ENCODE measurements at regions of chr14 and their contacts with region 1.

Region 1: DNA sequence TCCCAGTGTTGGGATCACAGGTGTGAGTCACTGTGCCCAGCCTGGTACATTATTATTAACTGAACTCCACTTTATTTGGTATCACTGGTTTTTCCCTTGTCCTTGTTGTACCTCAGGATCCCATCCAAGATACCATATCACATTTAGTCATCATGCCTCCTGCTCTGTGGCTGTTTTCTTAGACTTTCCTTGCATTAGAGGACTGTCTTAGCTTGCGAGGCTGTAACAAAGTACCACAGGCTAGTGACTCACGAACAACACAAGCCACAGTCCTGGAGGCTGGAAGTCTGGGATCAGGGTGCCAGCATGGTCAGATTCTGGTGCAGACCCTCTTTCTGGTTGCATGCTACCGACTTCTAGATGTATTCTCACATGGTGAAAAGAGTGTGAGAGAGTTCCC is 12.2 kb downstream of the KLC1 start:
- DNase-seq: no peak

Region 2: GRCh38 chr14:103629503-103630121 is 11.6 kb before region 1 on chr14:
- intact Hi-C with region 1: loop called in 1 of 2 experiments (anchors 1 kb)
- DNase-seq: peak; percentile 89

Region 3: DNA sequence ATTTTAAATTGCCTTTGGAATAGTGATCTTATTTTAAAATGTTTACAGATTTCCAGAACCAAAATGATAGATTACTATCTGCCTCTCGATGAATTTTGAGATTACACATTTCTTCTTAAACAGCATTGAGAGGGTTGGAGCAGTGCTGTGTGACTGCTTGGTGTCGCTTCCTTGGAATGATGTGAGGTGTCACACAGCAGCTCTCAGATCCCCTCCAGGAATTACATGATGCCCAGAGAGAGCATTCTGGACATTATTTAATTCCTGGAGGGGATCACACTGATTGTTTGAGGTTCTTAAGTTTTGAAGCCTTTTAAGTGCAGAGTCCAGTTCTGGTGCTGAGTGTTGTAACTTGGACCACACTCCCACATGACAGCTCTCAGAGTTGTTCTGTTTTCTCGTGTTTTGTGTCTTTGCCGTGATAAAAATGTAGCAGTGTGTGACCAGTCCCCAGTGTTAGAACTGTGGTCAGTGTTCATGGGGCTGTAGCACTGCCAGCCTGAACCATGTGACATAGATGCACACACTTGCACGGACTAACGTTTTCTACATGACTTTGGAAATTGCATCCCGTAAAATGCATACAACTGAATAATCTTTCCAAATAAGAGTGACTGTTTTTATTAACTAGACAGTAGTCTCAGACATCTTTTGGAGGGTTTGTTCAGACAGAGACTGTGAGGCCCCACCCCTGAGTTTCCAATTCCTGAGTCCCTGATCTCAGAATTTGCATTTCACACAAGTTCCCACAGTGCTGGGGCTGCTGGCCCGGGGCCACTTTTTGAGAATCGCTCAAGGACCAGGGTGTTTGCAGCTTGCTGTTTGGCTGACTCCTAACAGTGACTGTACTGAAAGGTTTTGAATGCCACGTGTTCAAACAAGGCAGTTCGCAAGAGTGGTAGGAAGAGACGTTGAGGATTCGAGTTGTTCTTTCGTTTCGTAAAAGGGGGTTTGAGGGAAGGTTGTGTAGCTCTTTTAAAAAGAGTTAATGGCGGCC is 48.0 kb after region 1 on chr14:
- intact Hi-C with region 1: no loop called
- DNase-seq: peak; percentile 84